MCF 10A (cell line): ENCODE measurements at regions of chr1 and their contacts with region 1.

Region 1: DNA sequence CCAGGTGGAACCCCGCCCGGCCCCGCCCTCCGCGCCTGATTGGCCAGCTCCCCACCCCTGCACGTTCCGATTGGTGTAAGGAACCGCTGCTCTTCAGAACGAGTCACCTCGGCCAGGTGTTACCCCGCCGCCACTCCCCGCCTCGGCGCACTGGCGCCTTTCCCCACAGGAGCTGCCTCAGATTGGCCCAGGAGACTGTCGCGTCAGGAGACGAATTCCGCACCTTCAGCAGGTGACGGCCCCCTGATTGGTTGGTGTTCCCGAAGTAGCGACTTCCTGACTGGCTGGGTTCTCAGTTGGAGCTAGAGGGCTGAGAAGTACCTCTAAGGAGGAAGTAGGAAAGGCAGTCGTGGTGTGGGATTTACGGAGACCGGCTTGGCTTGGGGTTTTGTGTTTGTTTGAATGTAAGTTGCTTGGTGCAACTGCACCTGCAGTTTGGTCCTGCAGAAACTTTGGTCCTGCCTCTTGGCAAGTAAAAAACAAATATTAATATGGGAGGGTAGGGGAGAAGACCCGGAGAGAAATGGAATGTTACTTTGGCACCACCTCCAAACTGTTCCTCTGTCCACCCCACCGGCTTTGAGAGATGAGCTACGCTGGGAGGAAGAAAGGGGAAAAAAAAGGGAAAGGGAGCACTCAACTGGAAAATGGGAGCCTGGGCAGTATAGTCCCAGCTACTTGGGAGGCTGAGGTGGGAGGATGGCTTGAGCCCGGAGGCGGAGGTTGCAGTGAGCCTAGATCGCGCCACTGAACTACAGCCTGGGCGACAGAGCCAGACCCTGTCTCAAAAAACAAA is 411 bp upstream of the F11R start:
- DNase-seq: peak; percentile 99
- H3K4me3 Mint-ChIP-seq: peak overlapping the region; percentile 80
- H3K27ac Mint-ChIP-seq: peak overlapping the region; percentile 94
- H3K4me1 Mint-ChIP-seq: peaks cover 47% of the 10 kb centered on the region
- H3K27me3 Mint-ChIP-seq: no peaks in the 10 kb centered on the region
- CTCF ChIP-seq: no peak

Region 2: DNA sequence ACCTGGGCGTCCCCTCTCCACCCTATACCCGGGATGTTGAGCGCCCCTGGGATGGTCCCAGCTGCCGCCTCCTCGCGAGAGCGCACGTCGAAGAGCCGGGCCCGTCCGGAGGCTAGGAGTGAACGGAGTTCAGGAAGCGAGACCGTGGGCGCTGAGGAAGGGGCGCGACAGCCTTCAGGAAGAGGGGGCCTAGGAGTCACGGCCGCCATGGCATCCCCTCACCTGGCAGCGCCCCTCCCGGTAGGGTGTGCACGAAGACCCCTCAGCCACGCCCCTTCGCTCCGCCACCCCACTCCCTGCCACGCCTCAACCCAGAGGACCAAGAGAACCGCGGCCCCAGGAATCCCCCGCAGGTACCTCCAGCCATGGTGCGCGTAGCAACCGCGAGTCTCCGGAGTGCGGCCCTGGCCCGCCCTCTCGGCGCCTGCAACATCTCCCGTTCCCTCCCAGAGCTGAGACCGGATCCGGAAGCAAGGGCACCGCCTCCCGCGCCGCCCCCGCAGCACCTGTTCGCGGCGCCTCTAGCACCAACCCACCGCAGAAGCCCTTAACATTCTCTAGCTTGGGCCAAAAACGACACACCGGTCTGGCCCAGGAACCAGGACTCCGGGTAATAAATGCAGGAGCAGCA is 17.3 kb after region 1 on chr1 and contains the start of gene TSTD1:
- CTCF ChIA-PET with region 1: interaction called, 17 read pairs
- POLR2A ChIA-PET with region 1: interaction called, 371 read pairs
- intact Hi-C with region 1: no loop called
- DNase-seq: peak; percentile 76
- H3K4me3 Mint-ChIP-seq: peak within 1 kb of the TSS; percentile 81
- H3K27ac Mint-ChIP-seq: peak within 1 kb of the TSS; percentile 76
- H3K4me1 Mint-ChIP-seq: peaks cover 17% of the 10 kb centered on the region
- H3K27me3 Mint-ChIP-seq: no peaks in the 10 kb centered on the region
- CTCF ChIP-seq: no peak
- total RNA-seq, gene TSTD1: 35.2 and 48.0 TPM in 2 replicates

Region 3: DNA sequence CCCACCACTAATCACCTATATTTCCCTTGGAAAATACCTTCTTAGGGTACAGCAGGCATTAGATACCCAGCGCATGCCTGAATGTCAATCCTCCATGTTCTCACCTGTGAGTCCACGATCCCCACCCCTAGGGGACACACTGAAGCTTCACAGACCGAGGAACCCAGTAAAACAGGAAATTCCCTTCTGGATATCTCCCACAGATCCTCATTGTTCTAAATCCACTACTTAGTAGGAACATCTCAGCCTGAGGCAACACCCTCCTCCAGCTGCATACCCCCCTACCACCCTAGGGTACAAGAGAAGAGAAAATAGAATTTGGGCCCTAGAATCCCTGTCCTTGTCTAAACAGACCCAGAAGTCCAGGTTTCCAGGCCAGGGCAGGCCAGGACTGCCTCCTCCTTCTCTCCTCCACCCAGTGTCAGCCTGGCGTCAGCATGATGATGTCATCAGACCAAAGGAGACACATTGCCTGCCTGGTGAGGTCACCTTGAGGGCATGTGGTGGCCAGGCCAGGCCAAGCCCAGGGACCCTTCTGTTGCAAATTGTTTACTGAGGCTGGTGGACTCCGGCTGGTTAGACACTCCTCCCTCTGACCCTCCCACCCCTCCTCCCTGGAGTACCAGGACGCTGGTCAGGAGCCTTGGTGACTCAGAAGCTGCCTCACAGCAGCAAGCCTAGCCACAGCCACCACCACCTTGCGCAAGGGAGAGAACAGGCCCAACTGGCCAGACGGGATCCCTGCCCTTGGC is 61.8 kb after region 1 on chr1:
- CTCF ChIA-PET with region 1: interaction called, 3 read pairs
- POLR2A ChIA-PET with region 1: interaction called, 82 read pairs
- intact Hi-C with region 1: no loop called
- DNase-seq: peak; percentile 98
- H3K4me3 Mint-ChIP-seq: peak overlapping the region; percentile 4
- H3K27ac Mint-ChIP-seq: peak overlapping the region; percentile 90
- H3K4me1 Mint-ChIP-seq: peaks cover 73% of the 10 kb centered on the region
- H3K27me3 Mint-ChIP-seq: no peaks in the 10 kb centered on the region
- CTCF ChIP-seq: no peak

Region 4: GRCh38 chr1:161111527-161111926 is 90.2 kb after region 1 on chr1:
- CTCF ChIA-PET with region 1: no interaction called
- POLR2A ChIA-PET with region 1: interaction called, 112 read pairs
- intact Hi-C with region 1: no loop called
- DNase-seq: no peak
- H3K4me3 Mint-ChIP-seq: no peak overlapping the region
- H3K27ac Mint-ChIP-seq: peak overlapping the region; percentile 21
- H3K4me1 Mint-ChIP-seq: peaks cover 44% of the 10 kb centered on the region
- H3K27me3 Mint-ChIP-seq: no peaks in the 10 kb centered on the region
- CTCF ChIP-seq: no peak

Region 5: GRCh38 chr1:161153679-161154426 is 132.5 kb after region 1 on chr1 and contains the start of gene UFC1:
- CTCF ChIA-PET with region 1: interaction called, 4 read pairs
- POLR2A ChIA-PET with region 1: interaction called, 13 read pairs
- intact Hi-C with region 1: no loop called
- DNase-seq: peak; percentile 94
- H3K4me3 Mint-ChIP-seq: peak within 1 kb of the TSS; percentile 92
- H3K27ac Mint-ChIP-seq: peak within 1 kb of the TSS; percentile 100
- H3K4me1 Mint-ChIP-seq: peaks cover 18% of the 10 kb centered on the region
- H3K27me3 Mint-ChIP-seq: no peaks in the 10 kb centered on the region
- CTCF ChIP-seq: no peak
- total RNA-seq, gene UFC1: 123 and 125 TPM in 2 replicates

Region 6: DNA sequence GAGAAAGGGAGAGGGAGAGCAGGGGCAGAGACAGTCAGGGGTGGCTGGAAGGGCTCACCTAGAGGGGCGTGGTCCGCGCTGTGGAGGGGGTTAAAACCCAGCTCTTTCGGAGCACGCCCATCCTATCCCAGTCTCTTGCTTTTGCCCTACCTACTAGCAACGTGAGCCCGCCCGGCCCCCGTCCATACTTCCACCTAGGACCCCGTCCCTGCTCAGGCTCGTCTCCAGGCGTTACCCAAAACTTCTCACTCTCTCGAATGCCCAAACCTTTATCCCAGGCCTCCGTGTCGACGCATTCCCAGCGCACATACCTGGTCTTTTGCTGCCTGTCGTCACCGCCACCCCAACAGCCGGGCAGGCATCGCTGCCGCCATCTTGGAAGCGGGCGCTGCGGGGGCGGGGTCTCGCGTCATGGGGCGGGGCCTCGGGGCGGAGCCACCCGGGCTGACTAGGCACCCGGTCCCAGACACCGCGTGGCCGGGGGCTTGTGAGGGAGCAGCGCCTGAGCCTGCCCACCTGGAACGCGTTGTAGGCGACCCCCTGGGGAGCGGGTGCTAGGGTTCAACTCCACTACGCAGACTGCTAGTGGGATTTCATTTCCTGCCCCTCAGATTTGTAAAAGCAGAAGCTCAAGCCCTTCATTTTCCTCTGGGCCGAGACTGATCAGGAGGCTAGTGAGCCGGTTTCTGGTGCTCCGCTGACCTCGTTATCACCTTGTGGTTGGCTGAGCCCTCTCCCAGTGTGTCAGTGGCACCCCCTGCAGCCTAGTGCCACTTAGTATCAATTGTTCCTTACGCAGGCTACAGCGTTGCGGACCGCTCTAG is 156.0 kb after region 1 on chr1 and contains the start of gene B4GALT3:
- CTCF ChIA-PET with region 1: no interaction called
- POLR2A ChIA-PET with region 1: interaction called, 15 read pairs
- intact Hi-C with region 1: no loop called
- DNase-seq: peak; percentile 87
- H3K4me3 Mint-ChIP-seq: peak within 1 kb of the TSS; percentile 86
- H3K27ac Mint-ChIP-seq: peak within 1 kb of the TSS; percentile 92
- H3K4me1 Mint-ChIP-seq: peaks cover 37% of the 10 kb centered on the region
- H3K27me3 Mint-ChIP-seq: no peaks in the 10 kb centered on the region
- CTCF ChIP-seq: no peak
- total RNA-seq, gene B4GALT3: 50.0 and 51.7 TPM in 2 replicates